ENCODE measurements at regions of chr7 and their contacts with region 1.

Region 1: DNA sequence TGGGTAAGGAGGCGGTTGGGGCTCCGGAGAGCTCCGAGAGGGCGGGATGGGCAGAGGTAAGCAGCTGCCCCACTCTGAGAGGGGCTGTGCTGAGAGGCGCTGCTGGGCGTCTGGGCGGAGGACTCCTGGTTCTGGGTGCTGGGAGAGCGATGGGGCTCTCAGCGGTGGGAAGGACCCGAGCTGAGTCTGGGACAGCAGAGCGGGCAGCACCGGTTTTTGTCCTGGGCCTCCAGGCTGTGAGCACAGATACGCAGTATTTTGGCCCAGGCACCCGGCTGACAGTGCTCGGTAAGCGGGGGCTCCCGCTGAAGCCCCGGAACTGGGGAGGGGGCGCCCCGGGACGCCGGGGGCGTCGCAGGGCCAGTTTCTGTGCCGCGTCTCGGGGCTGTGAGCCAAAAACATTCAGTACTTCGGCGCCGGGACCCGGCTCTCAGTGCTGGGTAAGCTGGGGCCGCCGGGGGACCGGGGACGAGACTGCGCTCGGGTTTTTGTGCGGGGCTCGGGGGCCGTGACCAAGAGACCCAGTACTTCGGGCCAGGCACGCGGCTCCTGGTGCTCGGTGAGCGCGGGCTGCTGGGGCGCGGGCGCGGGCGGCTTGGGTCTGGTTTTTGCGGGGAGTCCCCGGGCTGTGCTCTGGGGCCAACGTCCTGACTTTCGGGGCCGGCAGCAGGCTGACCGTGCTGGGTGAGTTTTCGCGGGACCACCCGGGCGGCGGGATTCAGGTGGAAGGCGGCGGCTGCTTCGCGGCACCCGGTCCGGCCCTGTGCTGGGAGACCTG is 26.0 kb downstream of the PRSS2 start:
- DNase-seq: peak in 3 of 9 donors; percentile 25 to 45 (median 40)
- ATAC-seq: peak; percentile 2
- H3K4me3 ChIP-seq: peak overlapping the region; percentile 83
- H3K4me3 Mint-ChIP-seq: peak overlapping the region; percentile 95 to 100 (median 99)
- H3K27ac ChIP-seq: peak overlapping the region; percentile 98
- H3K27ac Mint-ChIP-seq: peak overlapping the region; percentile 99 to 100 (median 100)
- H3K4me1 ChIP-seq: peaks cover 43 to 45% of the 10 kb centered on the region in 2 donors
- H3K4me1 Mint-ChIP-seq: peaks cover 29 to 70% (median 67%) of the 10 kb centered on the region in 7 donors
- H3K27me3 ChIP-seq: no peaks in the 10 kb centered on the region
- H3K27me3 Mint-ChIP-seq: peaks cover 0 to 2% (median 0%) of the 10 kb centered on the region in 5 donors

Region 2: GRCh38 chr7:142308326-142308725 is 488.5 kb before region 1 on chr7:
- CTCF ChIA-PET with region 1: interaction called, 5 read pairs
- POLR2A ChIA-PET with region 1: interaction called, 30 read pairs
- intact Hi-C with region 1: no loop called
- DNase-seq: no peak
- ATAC-seq: peak; percentile 34
- H3K4me3 ChIP-seq: no peak overlapping the region
- H3K4me3 Mint-ChIP-seq: peak overlapping the region in 6 of 10 donors; percentile 15 to 76 (median 48)
- H3K27ac ChIP-seq: no peak overlapping the region
- H3K27ac Mint-ChIP-seq: no peak overlapping the region
- H3K4me1 ChIP-seq: peaks cover 9 to 12% of the 10 kb centered on the region in 2 donors
- H3K4me1 Mint-ChIP-seq: peaks cover 5 to 30% (median 25%) of the 10 kb centered on the region in 7 donors
- H3K27me3 ChIP-seq: no peaks in the 10 kb centered on the region
- H3K27me3 Mint-ChIP-seq: peaks cover 0 to 30% (median 13%) of the 10 kb centered on the region in 5 donors

Region 3: DNA sequence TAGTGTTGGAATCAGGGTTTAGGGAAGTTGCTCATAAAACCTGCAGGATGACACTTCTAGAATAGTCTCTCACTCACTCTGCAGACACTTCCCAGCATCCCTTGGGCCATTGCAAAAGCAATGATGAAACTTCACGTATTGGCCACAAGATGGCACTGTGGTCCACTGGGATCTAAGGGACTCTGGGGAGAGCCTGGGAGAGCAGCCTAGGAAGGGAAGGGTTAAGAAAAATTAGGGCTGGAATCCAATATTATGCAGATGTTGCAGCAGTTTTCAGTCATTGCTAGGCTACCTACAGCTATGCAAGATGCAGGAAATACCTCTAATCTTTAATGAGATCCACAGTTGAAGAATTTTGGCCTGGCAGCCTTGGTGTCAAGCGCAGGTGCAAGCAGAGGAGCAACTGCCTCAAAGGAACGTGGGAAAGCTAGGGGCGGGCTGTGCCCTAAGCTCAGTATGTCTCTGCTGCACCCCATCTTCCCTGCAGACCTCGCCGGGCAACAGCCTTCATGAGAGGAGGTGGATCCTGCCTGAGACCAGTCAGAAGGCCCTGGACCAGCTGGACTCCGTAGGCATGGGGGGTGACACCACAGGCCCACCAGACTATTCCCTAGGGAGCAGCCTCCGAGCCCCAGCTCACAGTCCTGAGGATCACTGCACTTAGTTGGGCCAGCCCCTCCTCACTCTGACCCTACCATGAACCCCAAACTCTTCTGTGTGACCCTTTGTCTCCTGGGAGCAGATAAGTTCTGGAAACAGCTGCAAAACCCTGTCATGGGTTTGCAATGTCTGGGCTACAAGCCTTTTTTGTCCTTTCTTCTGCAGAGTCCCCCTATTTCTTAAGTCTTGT is 411.1 kb before region 1 on chr7:
- CTCF ChIA-PET with region 1: no interaction called
- POLR2A ChIA-PET with region 1: interaction called, 15 read pairs
- intact Hi-C with region 1: loop called in 1 of 2 experiments (anchors 5 kb)
- DNase-seq: peak in 5 of 9 donors; percentile 31 to 45 (median 39)
- ATAC-seq: peak; percentile 80
- H3K4me3 ChIP-seq: no peak overlapping the region
- H3K4me3 Mint-ChIP-seq: peak overlapping the region in 8 of 10 donors; percentile 1 to 75 (median 26)
- H3K27ac ChIP-seq: no peak overlapping the region
- H3K27ac Mint-ChIP-seq: peak overlapping the region in 3 of 9 donors; percentile 61 to 67 (median 63)
- H3K4me1 ChIP-seq: peaks cover 0 to 16% of the 10 kb centered on the region in 2 donors
- H3K4me1 Mint-ChIP-seq: peaks cover 22 to 38% (median 29%) of the 10 kb centered on the region in 7 donors
- H3K27me3 ChIP-seq: no peaks in the 10 kb centered on the region
- H3K27me3 Mint-ChIP-seq: no peaks in the 10 kb centered on the region

Region 4: DNA sequence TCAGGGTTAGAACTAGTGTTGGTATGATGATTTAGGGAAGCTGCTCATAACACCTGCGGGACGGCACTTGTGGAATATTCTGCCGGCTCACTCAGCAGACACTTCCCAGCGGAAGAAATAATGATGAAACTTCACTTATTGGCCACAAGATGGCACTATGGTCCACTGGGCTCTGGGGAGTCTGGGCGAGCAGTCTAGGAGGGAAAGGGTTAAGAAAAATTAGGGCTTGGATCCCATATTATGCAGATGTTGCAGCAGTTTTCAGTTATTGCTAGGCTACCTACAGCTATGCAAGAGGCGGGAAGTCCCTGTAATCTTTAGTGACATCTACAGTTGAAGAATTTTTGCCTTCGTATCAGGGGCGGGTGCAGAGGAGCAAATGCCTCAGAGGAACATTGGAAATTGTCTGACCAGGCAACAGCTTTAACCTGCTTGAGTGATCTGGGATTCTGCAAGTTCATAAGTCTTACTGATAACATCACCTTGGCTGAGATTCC is 300.2 kb before region 1 on chr7:
- CTCF ChIA-PET with region 1: no interaction called
- POLR2A ChIA-PET with region 1: interaction called, 12 read pairs
- intact Hi-C with region 1: no loop called
- DNase-seq: peak in 7 of 9 donors; percentile 39 to 58 (median 45)
- ATAC-seq: peak; percentile 71
- H3K4me3 ChIP-seq: peak overlapping the region; percentile 30
- H3K4me3 Mint-ChIP-seq: peak overlapping the region; percentile 41 to 85 (median 70)
- H3K27ac ChIP-seq: peak overlapping the region; percentile 64
- H3K27ac Mint-ChIP-seq: peak overlapping the region; percentile 33 to 93 (median 77)
- H3K4me1 ChIP-seq: peaks cover 5 to 46% of the 10 kb centered on the region in 2 donors
- H3K4me1 Mint-ChIP-seq: peaks cover 15 to 72% (median 65%) of the 10 kb centered on the region in 7 donors
- H3K27me3 ChIP-seq: no peaks in the 10 kb centered on the region
- H3K27me3 Mint-ChIP-seq: peaks cover 0 to 9% (median 0%) of the 10 kb centered on the region in 5 donors

Region 5: DNA sequence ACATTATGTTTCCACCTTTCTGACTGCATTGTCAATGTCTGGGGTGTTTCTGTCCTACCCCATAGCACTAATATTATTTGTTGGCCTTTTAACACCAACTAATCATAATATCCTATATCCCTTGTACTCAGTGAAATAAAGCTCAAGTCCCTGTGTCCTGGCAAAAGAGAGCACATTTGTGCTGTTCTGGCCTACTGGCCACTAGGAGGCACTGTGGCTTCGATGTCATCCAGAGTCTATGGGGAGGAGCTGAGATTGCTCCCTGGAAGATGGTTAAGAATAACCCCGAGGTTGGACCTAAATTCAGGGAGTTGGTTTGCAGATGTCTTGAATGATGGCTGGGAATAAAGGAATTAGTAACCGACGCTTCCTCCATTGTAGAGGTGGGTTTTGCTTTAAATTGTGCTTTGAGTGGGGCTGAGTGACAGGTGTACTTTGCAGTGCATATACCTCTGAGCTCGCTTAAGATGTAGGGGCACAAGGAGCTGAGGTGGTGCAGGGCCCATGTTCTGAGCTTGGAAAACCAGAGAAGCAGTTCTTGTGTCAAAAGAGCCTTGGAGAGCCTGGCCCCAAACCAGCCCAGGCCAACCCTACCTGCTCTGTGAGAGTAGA is 238.7 kb before region 1 on chr7:
- CTCF ChIA-PET with region 1: no interaction called
- POLR2A ChIA-PET with region 1: interaction called, 14 read pairs
- intact Hi-C with region 1: no loop called
- DNase-seq: peak; percentile 24 to 56 (median 42)
- ATAC-seq: peak; percentile 87
- H3K4me3 ChIP-seq: no peak overlapping the region
- H3K4me3 Mint-ChIP-seq: peak overlapping the region; percentile 18 to 73 (median 59)
- H3K27ac ChIP-seq: no peak overlapping the region
- H3K27ac Mint-ChIP-seq: peak overlapping the region in 4 of 9 donors; percentile 6 to 73 (median 48)
- H3K4me1 ChIP-seq: no peaks in the 10 kb centered on the region
- H3K4me1 Mint-ChIP-seq: peaks cover 0 to 26% (median 5%) of the 10 kb centered on the region in 7 donors
- H3K27me3 ChIP-seq: no peaks in the 10 kb centered on the region
- H3K27me3 Mint-ChIP-seq: peaks cover 0 to 24% (median 4%) of the 10 kb centered on the region in 5 donors

Region 6: GRCh38 chr7:142626420-142627035 is 170.3 kb before region 1 on chr7:
- CTCF ChIA-PET with region 1: interaction called, 4 read pairs
- POLR2A ChIA-PET with region 1: interaction called, 24 read pairs
- intact Hi-C with region 1: no loop called
- DNase-seq: peak; percentile 42 to 68 (median 61)
- ATAC-seq: peak; percentile 88
- H3K4me3 ChIP-seq: no peak overlapping the region
- H3K4me3 Mint-ChIP-seq: peak overlapping the region; percentile 61 to 89 (median 83)
- H3K27ac ChIP-seq: peak overlapping the region; percentile 58
- H3K27ac Mint-ChIP-seq: peak overlapping the region; percentile 61 to 96 (median 83)
- H3K4me1 ChIP-seq: no peaks in the 10 kb centered on the region
- H3K4me1 Mint-ChIP-seq: peaks cover 0 to 7% (median 3%) of the 10 kb centered on the region in 7 donors
- H3K27me3 ChIP-seq: no peaks in the 10 kb centered on the region
- H3K27me3 Mint-ChIP-seq: peaks cover 0 to 19% (median 0%) of the 10 kb centered on the region in 5 donors

Region 7: GRCh38 chr7:142835487-142835886 is 38.7 kb after region 1 on chr7:
- CTCF ChIA-PET with region 1: no interaction called
- POLR2A ChIA-PET with region 1: interaction called, 26 read pairs
- intact Hi-C with region 1: no loop called
- DNase-seq: peak in 5 of 9 donors; percentile 29 to 57 (median 42)
- ATAC-seq: no peak
- H3K4me3 ChIP-seq: no peak overlapping the region
- H3K4me3 Mint-ChIP-seq: peak overlapping the region in 5 of 10 donors; percentile 18 to 61 (median 45)
- H3K27ac ChIP-seq: no peak overlapping the region
- H3K27ac Mint-ChIP-seq: peak overlapping the region in 8 of 9 donors; percentile 15 to 88 (median 70)
- H3K4me1 ChIP-seq: no peaks in the 10 kb centered on the region
- H3K4me1 Mint-ChIP-seq: peaks cover 2 to 34% (median 16%) of the 10 kb centered on the region in 7 donors
- H3K27me3 ChIP-seq: no peaks in the 10 kb centered on the region
- H3K27me3 Mint-ChIP-seq: peaks cover 0 to 4% (median 0%) of the 10 kb centered on the region in 5 donors

Region 8: DNA sequence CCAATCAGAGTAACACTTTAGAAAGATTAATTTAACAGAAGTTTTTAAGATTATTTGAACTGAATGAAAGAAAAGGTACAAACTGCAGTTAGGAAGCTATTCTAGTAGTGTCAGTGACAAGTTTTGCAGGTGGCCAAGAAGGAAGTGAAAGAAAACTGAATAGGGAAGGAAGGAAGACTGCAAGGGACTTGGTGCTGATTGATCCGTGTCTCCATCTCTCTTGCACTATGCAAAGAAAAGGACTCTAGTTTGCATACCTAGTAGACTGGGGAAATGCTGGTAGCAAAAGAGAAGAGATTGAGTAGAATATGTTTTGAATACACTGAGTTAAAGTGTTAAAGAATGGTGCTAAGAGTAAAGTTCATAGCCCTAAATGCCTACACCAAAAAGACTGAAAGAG is 288.3 kb after region 1 on chr7:
- CTCF ChIA-PET with region 1: no interaction called
- POLR2A ChIA-PET with region 1: no interaction called
- intact Hi-C with region 1: no loop called
- DNase-seq: no peak
- ATAC-seq: peak; percentile 41
- H3K4me3 ChIP-seq: no peak overlapping the region
- H3K4me3 Mint-ChIP-seq: no peak overlapping the region
- H3K27ac ChIP-seq: no peak overlapping the region
- H3K27ac Mint-ChIP-seq: no peak overlapping the region
- H3K4me1 ChIP-seq: no peaks in the 10 kb centered on the region
- H3K4me1 Mint-ChIP-seq: peaks cover 0 to 2% (median 0%) of the 10 kb centered on the region in 7 donors
- H3K27me3 ChIP-seq: no peaks in the 10 kb centered on the region
- H3K27me3 Mint-ChIP-seq: peaks cover 3 to 33% (median 26%) of the 10 kb centered on the region in 5 donors

Region 9: DNA sequence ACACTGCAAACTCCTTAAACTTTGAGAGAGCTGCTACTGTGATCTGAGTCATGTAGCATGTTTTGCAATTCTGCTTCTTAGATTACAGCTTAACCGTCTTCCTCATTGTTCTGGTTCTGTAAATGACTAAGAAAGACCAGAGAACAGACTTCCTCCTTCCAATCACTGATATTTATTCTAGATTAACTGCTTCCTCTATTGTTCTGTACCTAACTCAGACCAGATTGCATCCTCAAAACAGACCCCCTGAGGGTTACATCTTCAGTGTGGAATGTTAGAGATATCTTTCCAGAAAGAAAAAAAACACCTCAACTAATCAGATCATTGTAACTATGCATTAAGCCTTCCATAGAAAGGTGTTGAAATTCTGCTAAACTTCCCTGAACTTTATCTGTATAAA is 329.3 kb after region 1 on chr7:
- CTCF ChIA-PET with region 1: no interaction called
- POLR2A ChIA-PET with region 1: no interaction called
- intact Hi-C with region 1: no loop called
- DNase-seq: no peak
- ATAC-seq: peak; percentile 85
- H3K4me3 ChIP-seq: no peak overlapping the region
- H3K4me3 Mint-ChIP-seq: no peak overlapping the region
- H3K27ac ChIP-seq: no peak overlapping the region
- H3K27ac Mint-ChIP-seq: no peak overlapping the region
- H3K4me1 ChIP-seq: no peaks in the 10 kb centered on the region
- H3K4me1 Mint-ChIP-seq: peaks cover 0 to 3% (median 0%) of the 10 kb centered on the region in 7 donors
- H3K27me3 ChIP-seq: no peaks in the 10 kb centered on the region
- H3K27me3 Mint-ChIP-seq: peaks cover 15 to 28% (median 18%) of the 10 kb centered on the region in 5 donors

Measured in naive thymus-derived CD4-positive, alpha-beta T cell (primary cell).